ENCODE measurements at regions of chr1 and their contacts with region 1.

Region 1: DNA sequence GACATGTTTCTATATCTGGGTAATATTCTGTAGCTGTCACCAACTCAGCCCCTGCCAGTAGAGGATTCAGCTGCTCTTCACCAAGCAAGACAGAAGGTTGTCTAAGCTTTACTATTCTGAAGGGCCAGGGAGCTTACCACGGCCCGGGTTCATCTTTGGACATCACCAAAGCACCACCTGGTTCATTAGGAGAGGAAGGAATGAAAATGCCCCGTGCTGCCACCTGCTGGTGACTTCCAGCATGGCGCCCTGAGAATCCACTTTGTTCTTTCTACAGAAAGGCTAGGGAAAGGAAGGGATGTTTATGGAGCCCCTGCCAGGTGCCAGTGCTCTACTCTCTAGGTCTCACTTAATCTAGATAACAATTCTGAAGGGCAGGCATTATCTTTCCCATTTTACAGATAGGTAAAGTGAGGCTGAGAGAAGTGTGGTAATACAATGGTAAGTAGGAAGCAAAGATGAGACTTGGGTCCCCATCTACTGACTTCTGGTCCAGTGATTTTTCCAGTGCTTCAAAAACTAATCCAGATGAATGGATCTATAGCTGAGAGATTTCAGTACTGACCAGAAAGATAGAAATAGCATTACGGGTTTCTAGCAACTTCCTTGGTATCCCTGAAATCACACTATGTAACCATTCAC is 79.5 kb downstream of the BEND5 start:
- DNase-seq: no peak
- H3K4me3 ChIP-seq: no peak overlapping the region
- H3K27ac ChIP-seq: no peak overlapping the region
- H3K4me1 ChIP-seq: no peaks in the 10 kb centered on the region
- H3K27me3 ChIP-seq: peaks cover 0 to 5% (median 0%) of the 10 kb centered on the region in 4 donors
- CTCF ChIP-seq: peak; percentile 77 to 93 (median 86)
- EP300 ChIP-seq: no peak
- POLR2A ChIP-seq: no peak

Region 2: DNA sequence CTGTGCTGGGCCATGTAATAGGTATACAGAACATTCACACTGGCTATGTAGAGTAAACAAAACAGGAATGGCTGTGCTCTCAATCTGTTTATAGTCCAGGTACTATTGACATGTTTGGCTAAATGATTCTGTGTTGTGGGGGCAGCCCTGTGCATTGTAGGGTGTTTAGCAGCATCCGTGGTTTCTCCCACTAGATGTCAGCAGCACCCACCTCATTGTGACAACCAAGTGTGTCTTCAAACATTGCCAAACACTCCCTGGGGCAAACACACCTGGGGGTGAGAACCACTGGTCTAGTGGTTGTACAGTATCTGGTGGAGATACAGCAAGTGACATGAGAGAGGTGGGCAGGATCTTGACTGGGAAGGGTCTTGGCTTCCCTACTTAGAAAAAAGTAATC is 144.8 kb before region 1 on chr1:
- intact Hi-C with region 1: loop called (anchors 5 kb)
- DNase-seq: no peak
- H3K4me3 ChIP-seq: no peak overlapping the region
- H3K27ac ChIP-seq: peak overlapping the region in 1 of 4 donors; percentile 37
- H3K4me1 ChIP-seq: peaks cover 5 to 21% (median 13%) of the 10 kb centered on the region in 4 donors
- H3K27me3 ChIP-seq: no peaks in the 10 kb centered on the region
- CTCF ChIP-seq: peak in 2 of 3 experiments; percentile 18 to 26
- EP300 ChIP-seq: no peak
- POLR2A ChIP-seq: no peak

Region 3: GRCh38 chr1:48572646-48573261 is 124.4 kb before region 1 on chr1:
- intact Hi-C with region 1: loop called (anchors 5 kb)
- DNase-seq: no peak
- H3K4me3 ChIP-seq: no peak overlapping the region
- H3K27ac ChIP-seq: no peak overlapping the region
- H3K4me1 ChIP-seq: peaks cover 0 to 4% (median 0%) of the 10 kb centered on the region in 4 donors
- H3K27me3 ChIP-seq: no peaks in the 10 kb centered on the region
- CTCF ChIP-seq: peak; percentile 48 to 58 (median 57)
- EP300 ChIP-seq: no peak
- POLR2A ChIP-seq: no peak

Measured in esophagus muscularis mucosa (tissue), 4 donors.